Naive thymus-derived CD8-positive, alpha-beta T cell (primary cell): ENCODE measurements at regions of chr17 and their contacts with region 1.

Region 1: DNA sequence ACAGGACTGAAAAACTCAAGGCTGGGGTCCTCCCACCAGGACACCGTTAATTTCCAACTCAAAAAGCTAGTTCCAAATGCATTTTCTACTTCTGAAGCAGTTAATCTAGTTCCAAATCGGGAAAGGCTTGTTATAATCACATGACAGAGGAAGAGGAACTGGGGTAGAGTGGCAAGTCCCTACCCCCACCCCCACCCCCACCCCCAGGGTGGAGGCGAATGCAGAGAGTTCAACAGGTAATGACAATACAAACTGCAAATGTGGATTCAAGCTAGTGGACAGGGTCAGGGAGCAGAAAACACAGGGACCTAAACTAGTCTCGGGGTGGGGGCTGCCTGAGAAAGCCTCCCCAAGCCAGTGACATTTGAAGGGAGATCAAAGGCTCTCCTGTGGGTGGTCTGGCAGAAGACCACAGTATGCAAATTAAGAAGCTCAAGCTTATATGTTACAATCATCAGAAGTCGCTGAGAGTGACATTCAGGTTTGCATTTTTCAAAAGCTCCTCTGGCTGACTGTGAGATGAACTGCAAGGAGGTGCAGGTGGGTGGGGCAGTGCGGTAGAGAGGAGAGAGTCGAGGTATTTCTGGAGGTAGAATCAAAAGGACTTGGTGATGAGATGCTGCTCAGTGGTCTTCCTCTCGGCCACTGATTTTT is 56.4 kb upstream of the SLC25A19 start:
- DNase-seq: peak; percentile 33 to 80 (median 63)
- ATAC-seq: peak; percentile 85 to 91
- H3K4me3 Mint-ChIP-seq: peak overlapping the region; percentile 68 to 95 (median 82)
- H3K27ac Mint-ChIP-seq: peak overlapping the region; percentile 85 to 97 (median 88)
- H3K4me1 Mint-ChIP-seq: peaks cover 44 to 98% (median 93%) of the 10 kb centered on the region in 4 donors
- H3K27me3 Mint-ChIP-seq: no peaks in the 10 kb centered on the region

Region 2: GRCh38 chr17:75250009-75250471 is 95.6 kb before region 1 on chr17:
- POLR2A ChIA-PET with region 1: no interaction called
- DNase-seq: peak in 3 of 10 donors; percentile 22 to 40 (median 23)
- ATAC-seq: peak; percentile 79 to 91
- H3K4me3 Mint-ChIP-seq: peak overlapping the region; percentile 37 to 79 (median 64)
- H3K27ac Mint-ChIP-seq: peak overlapping the region; percentile 70 to 96 (median 92)
- H3K4me1 Mint-ChIP-seq: peaks cover 41 to 57% (median 54%) of the 10 kb centered on the region in 4 donors
- H3K27me3 Mint-ChIP-seq: no peaks in the 10 kb centered on the region

Region 3: GRCh38 chr17:75373280-75373679 is 27.6 kb after region 1 on chr17:
- POLR2A ChIA-PET with region 1: interaction called, 11 read pairs
- DNase-seq: no peak
- ATAC-seq: no peak
- H3K4me3 Mint-ChIP-seq: peak overlapping the region in 2 of 10 donors; percentile 26 to 48
- H3K27ac Mint-ChIP-seq: peak overlapping the region in 1 of 10 donors; percentile 28
- H3K4me1 Mint-ChIP-seq: peaks cover 33 to 85% (median 75%) of the 10 kb centered on the region in 4 donors
- H3K27me3 Mint-ChIP-seq: no peaks in the 10 kb centered on the region

Region 4: GRCh38 chr17:75393523-75394331 is 48.1 kb after region 1 on chr17:
- POLR2A ChIA-PET with region 1: interaction called, 10 read pairs
- DNase-seq: peak; percentile 45 to 91 (median 63)
- ATAC-seq: peak; percentile 86 to 94
- H3K4me3 Mint-ChIP-seq: peak overlapping the region; percentile 85 to 98 (median 94)
- H3K27ac Mint-ChIP-seq: peak overlapping the region; percentile 83 to 93 (median 89)
- H3K4me1 Mint-ChIP-seq: peaks cover 38 to 89% (median 85%) of the 10 kb centered on the region in 4 donors
- H3K27me3 Mint-ChIP-seq: no peaks in the 10 kb centered on the region